ENCODE measurements at regions of chr1 and their contacts with region 1.

Region 1: GRCh38 chr1:16055613-16056520 is 12.3 kb downstream of the CLCNKB start:
- DNase-seq: peak; percentile 96
- H3K4me3 Mint-ChIP-seq: no peak overlapping the region
- H3K27ac Mint-ChIP-seq: no peak overlapping the region
- H3K4me1 Mint-ChIP-seq: peaks cover 6% of the 10 kb centered on the region
- H3K27me3 Mint-ChIP-seq: peaks cover 7% of the 10 kb centered on the region

Region 2: DNA sequence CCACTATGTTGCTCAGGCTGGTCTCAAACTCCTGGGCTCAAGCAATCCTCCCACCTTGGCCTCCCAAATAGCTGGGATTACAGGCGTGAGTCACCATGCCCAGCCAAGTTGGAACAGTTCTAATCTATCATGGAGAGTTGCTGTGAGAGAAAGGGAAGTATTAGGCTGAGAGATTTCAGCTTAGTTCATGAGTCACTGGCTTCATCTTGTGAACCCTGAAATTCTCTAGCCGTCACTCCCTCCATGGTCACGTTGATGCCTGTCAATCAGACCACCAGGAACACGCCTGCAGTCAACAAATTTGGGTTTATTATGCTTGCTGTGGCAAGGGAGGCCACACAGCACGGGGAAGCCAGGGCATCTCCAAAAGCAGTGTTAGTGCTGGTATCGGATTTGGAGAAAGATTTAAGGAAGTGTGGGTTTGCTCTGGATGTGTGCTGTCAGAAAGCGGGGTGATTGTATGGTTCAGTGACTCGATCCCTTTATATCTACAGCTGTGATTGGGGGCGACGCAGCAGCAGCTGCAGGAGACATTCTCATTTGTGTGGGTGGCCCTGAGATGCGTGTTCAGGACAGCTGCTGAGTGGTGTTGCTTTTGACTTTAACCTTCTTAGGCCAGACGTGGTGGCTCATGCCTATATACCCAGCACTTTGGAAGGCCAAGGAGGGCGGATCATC is 267.1 kb before region 1 on chr1:
- intact Hi-C with region 1: loop called (anchors 1 kb)
- DNase-seq: no peak
- H3K4me3 Mint-ChIP-seq: no peak overlapping the region
- H3K27ac Mint-ChIP-seq: no peak overlapping the region
- H3K4me1 Mint-ChIP-seq: peaks cover 2% of the 10 kb centered on the region
- H3K27me3 Mint-ChIP-seq: peaks cover 5% of the 10 kb centered on the region

Region 3: DNA sequence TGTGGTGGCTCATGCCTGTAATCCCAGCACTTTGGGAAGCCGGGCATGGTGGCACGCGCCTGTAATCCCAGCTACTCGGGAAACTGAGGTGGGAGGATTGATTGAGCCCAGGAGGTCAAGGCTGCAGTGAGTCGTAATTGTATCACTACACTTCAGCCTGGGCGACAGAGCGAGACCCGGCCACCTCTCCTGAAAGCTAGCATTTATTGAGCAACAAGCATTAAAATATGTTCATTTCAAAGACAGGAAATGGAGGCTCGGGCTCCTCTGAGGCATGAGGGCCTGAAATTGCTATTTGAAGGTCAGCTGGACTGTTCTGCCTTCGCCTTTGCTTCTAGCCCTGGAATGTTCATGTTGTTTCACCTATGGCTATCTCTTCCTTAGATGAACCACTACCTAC is 346.9 kb after region 1 on chr1:
- intact Hi-C with region 1: no loop called
- DNase-seq: no peak
- H3K4me3 Mint-ChIP-seq: no peak overlapping the region
- H3K27ac Mint-ChIP-seq: no peak overlapping the region
- H3K4me1 Mint-ChIP-seq: peaks cover 5% of the 10 kb centered on the region
- H3K27me3 Mint-ChIP-seq: no peaks in the 10 kb centered on the region